Caco-2 (cell line): ENCODE measurements at regions of chr22 and their contacts with region 1.

Region 1: GRCh38 chr22:17554814-17555213 is 8.5 kb upstream of the SLC25A18 start:
- DNase-seq: no peak
- H3K4me3 ChIP-seq: no peak overlapping the region
- H3K4me3 Mint-ChIP-seq: no peak overlapping the region
- H3K27ac Mint-ChIP-seq: no peak overlapping the region
- H3K4me1 ChIP-seq: no peaks in the 10 kb centered on the region
- H3K4me1 Mint-ChIP-seq: no peaks in the 10 kb centered on the region
- H3K27me3 ChIP-seq: no peaks in the 10 kb centered on the region
- H3K27me3 Mint-ChIP-seq: no peaks in the 10 kb centered on the region
- CTCF ChIP-seq: no peak

Region 2: GRCh38 chr22:17443405-17444203 is 111.2 kb before region 1 on chr22:
- CTCF ChIA-PET with region 1: no interaction called
- POLR2A ChIA-PET with region 1: no interaction called
- intact Hi-C with region 1: no loop called
- DNase-seq: no peak
- H3K4me3 ChIP-seq: no peak overlapping the region
- H3K4me3 Mint-ChIP-seq: no peak overlapping the region
- H3K27ac Mint-ChIP-seq: no peak overlapping the region
- H3K4me1 ChIP-seq: no peaks in the 10 kb centered on the region
- H3K4me1 Mint-ChIP-seq: no peaks in the 10 kb centered on the region
- H3K27me3 ChIP-seq: no peaks in the 10 kb centered on the region
- H3K27me3 Mint-ChIP-seq: peaks cover 3% of the 10 kb centered on the region
- CTCF ChIP-seq: no peak

Region 3: GRCh38 chr22:17628304-17629166 is 73.7 kb after region 1 on chr22 and contains the start of gene ATP6V1E1:
- CTCF ChIA-PET with region 1: interaction called, 6 read pairs
- POLR2A ChIA-PET with region 1: interaction called, 3 read pairs
- intact Hi-C with region 1: loop called (anchors 5 kb)
- DNase-seq: peak; percentile 96 to 97
- H3K4me3 ChIP-seq: peak within 1 kb of the TSS; percentile 89
- H3K4me3 Mint-ChIP-seq: peak within 1 kb of the TSS; percentile 86
- H3K27ac Mint-ChIP-seq: peak within 1 kb of the TSS; percentile 89
- H3K4me1 ChIP-seq: peaks cover 22% of the 10 kb centered on the region
- H3K4me1 Mint-ChIP-seq: peaks cover 10% of the 10 kb centered on the region
- H3K27me3 ChIP-seq: no peaks in the 10 kb centered on the region
- H3K27me3 Mint-ChIP-seq: no peaks in the 10 kb centered on the region
- CTCF ChIP-seq: no peak
- total RNA-seq, gene ATP6V1E1: 139 and 147 TPM in 2 replicates

Region 4: GRCh38 chr22:17717708-17718107 is 162.9 kb after region 1 on chr22:
- CTCF ChIA-PET with region 1: no interaction called
- POLR2A ChIA-PET with region 1: no interaction called
- intact Hi-C with region 1: loop called (anchors 5 kb)
- DNase-seq: no peak
- H3K4me3 ChIP-seq: no peak overlapping the region
- H3K4me3 Mint-ChIP-seq: no peak overlapping the region
- H3K27ac Mint-ChIP-seq: no peak overlapping the region
- H3K4me1 ChIP-seq: no peaks in the 10 kb centered on the region
- H3K4me1 Mint-ChIP-seq: no peaks in the 10 kb centered on the region
- H3K27me3 ChIP-seq: no peaks in the 10 kb centered on the region
- H3K27me3 Mint-ChIP-seq: no peaks in the 10 kb centered on the region
- CTCF ChIP-seq: no peak

Region 5: DNA sequence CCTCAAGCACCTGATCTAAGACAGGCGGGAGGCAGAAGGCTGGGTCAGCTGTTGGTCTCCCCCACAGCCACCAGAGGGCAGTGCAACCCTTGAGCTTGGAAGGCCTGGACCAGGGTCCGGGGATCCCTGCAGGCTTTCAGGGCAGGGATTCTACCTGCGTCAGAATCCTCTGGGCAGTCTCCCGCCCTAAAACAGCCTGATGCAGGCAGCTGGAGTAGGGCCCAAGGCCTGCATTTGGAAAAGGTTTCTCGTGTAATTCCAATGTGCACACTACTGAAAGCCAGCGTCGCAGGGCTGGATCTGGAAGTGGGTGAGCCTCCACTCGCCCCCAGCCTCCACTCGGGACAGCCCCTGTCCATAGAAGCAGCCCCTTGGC is 187.7 kb after region 1 on chr22:
- CTCF ChIA-PET with region 1: interaction called, 16 read pairs
- POLR2A ChIA-PET with region 1: no interaction called
- intact Hi-C with region 1: loop called (anchors 2 kb)
- DNase-seq: peak; percentile 80 to 85
- H3K4me3 ChIP-seq: no peak overlapping the region
- H3K4me3 Mint-ChIP-seq: no peak overlapping the region
- H3K27ac Mint-ChIP-seq: no peak overlapping the region
- H3K4me1 ChIP-seq: no peaks in the 10 kb centered on the region
- H3K4me1 Mint-ChIP-seq: no peaks in the 10 kb centered on the region
- H3K27me3 ChIP-seq: no peaks in the 10 kb centered on the region
- H3K27me3 Mint-ChIP-seq: no peaks in the 10 kb centered on the region
- CTCF ChIP-seq: peak; percentile 82 to 94

Region 6: DNA sequence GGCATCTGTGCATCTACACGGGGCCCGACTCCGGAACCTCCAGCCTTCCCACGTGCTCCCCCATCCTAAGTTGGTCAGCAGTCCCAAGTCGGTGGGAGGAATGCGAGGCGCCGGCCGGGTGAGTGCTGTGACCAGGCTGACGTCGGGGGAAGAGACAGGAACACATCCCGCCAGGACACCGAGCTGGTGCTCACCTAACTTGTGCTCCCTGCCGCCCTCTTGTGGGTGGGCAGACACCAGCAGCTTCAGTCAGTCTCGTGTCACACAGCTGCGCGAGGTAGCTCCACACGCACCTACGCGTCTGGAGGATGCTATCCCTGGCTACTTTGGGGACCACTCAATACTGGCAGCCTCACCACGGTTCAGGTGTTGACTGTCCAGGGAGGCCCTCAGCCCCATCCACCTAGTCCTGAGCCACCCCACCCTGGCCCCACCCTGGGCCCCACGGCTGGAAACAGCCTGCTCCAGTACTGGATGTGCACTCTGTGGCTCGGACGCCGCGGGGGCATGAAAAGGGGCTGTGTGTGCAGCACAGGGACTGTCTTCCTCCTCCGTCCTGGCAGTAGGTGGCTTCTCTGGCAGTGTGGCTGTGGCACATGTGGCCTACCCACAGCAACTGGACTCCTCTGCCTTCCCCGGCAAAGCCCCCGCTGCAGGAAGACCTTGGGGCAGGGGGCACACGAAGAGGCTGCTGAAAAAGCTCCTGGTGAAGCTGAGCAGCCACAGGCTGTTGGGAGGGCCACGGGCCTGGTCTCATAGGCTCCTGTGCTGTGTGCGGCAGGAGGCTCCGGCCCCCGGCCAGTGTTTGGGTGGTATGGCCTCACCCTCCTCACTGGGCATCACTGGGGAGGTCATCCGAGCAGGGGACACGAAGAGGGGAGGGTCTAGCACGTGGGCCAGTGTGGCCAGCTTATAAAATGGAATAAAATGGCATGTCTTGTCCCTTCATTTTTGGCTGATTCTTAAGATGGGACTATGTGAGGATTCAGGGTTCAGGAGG is 230.7 kb after region 1 on chr22:
- CTCF ChIA-PET with region 1: interaction called, 25 read pairs
- POLR2A ChIA-PET with region 1: no interaction called
- intact Hi-C with region 1: loop called (anchors 5 kb)
- DNase-seq: peak; percentile 70 to 78
- H3K4me3 ChIP-seq: no peak overlapping the region
- H3K4me3 Mint-ChIP-seq: no peak overlapping the region
- H3K27ac Mint-ChIP-seq: no peak overlapping the region
- H3K4me1 ChIP-seq: peaks cover 10% of the 10 kb centered on the region
- H3K4me1 Mint-ChIP-seq: no peaks in the 10 kb centered on the region
- H3K27me3 ChIP-seq: no peaks in the 10 kb centered on the region
- H3K27me3 Mint-ChIP-seq: no peaks in the 10 kb centered on the region
- CTCF ChIP-seq: peak; percentile 60